Breast epithelium (tissue), 4 donors: ENCODE measurements at regions of chr19 and their contacts with region 1.

Region 1: GRCh38 chr19:2578901-2579677 is 103.2 kb downstream of the GADD45B start:
- DNase-seq: peak; percentile 89 to 92
- H3K4me3 ChIP-seq: peak overlapping the region; percentile 44 to 78 (median 57)
- H3K27ac ChIP-seq: peak overlapping the region; percentile 87 to 89
- H3K4me1 ChIP-seq: peaks cover 10 to 15% of the 10 kb centered on the region in 2 donors
- H3K27me3 ChIP-seq: no peaks in the 10 kb centered on the region
- CTCF ChIP-seq: peak; percentile 90 to 99 (median 98)
- POLR2A ChIP-seq: no peak

Region 2: GRCh38 chr19:1700002-1700732 is 878.9 kb before region 1 on chr19:
- intact Hi-C with region 1: no loop called
- DNase-seq: no peak
- H3K4me3 ChIP-seq: no peak overlapping the region
- H3K27ac ChIP-seq: no peak overlapping the region
- H3K4me1 ChIP-seq: no peaks in the 10 kb centered on the region
- H3K27me3 ChIP-seq: peaks cover 5 to 42% of the 10 kb centered on the region in 2 donors
- CTCF ChIP-seq: no peak
- POLR2A ChIP-seq: no peak

Region 3: DNA sequence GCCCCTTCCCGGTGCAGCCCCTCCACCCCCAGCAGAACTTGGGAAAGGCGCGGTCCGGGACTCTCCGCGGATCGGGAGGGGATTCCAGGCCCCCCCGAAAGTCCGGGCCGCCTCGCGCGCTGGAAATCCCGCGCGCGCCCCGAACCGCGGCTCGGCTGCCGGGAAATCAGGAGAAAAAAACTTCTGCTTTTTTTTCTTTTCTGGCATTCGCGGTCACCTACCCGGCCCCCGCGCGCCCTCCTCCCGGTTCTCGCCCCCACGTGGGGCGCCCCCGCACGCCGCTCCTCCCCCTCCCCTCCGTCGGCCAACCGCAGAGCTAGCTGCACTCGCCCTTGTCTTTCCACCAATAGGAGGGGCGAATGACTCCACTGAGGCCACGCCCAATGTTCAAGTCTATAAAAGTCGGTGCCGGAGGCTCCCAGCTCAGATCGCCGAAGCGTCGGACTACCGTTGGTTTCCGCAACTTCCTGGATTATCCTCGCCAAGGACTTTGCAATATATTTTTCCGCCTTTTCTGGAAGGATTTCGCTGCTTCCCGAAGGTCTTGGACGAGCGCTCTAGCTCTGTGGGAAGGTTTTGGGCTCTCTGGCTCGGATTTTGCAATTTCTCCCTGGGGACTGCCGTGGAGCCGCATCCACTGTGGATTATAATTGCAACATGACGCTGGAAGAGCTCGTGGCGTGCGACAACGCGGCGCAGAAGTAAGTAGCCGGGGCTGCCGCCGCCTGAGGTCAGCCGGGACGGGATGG is 103.2 kb before region 1 on chr19 and contains the start of gene GADD45B:
- intact Hi-C with region 1: loop called (anchors 5 kb)
- DNase-seq: peak; percentile 96 to 99
- H3K4me3 ChIP-seq: peak within 1 kb of the TSS; percentile 71 to 91 (median 79)
- H3K27ac ChIP-seq: peak within 1 kb of the TSS; percentile 93 to 94
- H3K4me1 ChIP-seq: peaks cover 0 to 11% of the 10 kb centered on the region in 2 donors
- H3K27me3 ChIP-seq: no peaks in the 10 kb centered on the region
- CTCF ChIP-seq: peak in 2 of 3 donors; percentile 25 to 44
- POLR2A ChIP-seq: peak; percentile 100
- total RNA-seq, gene GADD45B: 136 to 301 (median 172) TPM

Region 4: DNA sequence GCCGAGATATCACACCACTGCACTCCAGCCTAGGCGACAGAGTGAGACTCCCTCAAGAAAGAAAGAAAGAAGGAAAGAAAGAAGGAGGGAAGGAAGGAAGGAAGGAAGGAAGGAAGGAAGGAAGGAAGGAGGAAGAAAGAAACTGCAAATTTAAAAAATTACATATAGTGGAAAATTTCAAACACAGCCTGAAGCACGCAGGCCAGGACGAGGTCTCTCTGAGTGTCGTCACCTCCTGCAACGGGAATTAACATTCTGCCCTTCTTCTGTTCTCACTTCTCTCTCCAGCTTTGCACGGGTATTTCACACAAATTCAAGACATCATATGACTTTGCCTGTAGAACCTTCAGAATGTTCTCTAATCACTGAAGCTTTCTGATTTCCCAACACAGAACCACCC is 15.2 kb after region 1 on chr19:
- intact Hi-C with region 1: no loop called
- DNase-seq: no peak
- H3K4me3 ChIP-seq: no peak overlapping the region
- H3K27ac ChIP-seq: no peak overlapping the region
- H3K4me1 ChIP-seq: no peaks in the 10 kb centered on the region
- H3K27me3 ChIP-seq: no peaks in the 10 kb centered on the region
- CTCF ChIP-seq: no peak
- POLR2A ChIP-seq: no peak

Region 5: DNA sequence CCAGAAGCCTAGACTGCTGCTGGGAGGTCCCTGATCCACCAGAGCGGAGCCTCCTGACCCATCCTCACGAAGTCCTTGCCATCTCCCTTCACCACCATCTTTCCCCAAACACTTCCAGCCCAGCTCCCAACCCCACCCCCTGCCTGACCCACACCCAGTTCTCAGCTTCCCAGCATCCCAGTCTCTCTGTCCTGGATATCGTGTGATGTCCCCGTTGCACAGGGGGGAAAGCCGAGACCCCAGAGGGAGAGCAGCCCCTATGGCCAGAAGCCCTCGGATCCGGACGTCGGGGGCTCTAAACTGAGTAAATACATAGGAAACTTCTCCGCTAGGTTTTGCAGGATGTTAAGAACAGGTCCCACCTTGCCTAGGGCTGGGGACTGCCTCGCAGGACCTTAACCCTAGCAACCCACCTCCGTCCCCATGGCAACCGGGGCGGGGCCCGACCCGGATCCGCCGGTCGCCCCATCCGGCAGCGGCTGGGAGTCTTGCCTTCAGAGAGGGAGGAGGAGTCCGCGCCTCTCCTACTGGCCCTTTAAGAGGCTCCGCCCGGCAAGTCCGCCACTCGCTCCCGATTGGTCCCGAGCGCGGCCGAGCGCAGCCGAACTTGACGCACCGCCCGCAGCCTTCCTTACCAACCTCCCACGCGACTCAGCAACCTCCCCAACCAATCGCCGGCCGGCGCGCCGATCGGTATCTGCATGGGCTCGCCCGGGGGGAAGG is 993.2 kb after region 1 on chr19:
- intact Hi-C with region 1: no loop called
- DNase-seq: peak; percentile 100
- H3K4me3 ChIP-seq: peak overlapping the region; percentile 90 to 96 (median 95)
- H3K27ac ChIP-seq: peak overlapping the region; percentile 76 to 92
- H3K4me1 ChIP-seq: no peaks in the 10 kb centered on the region
- H3K27me3 ChIP-seq: no peaks in the 10 kb centered on the region
- CTCF ChIP-seq: no peak
- POLR2A ChIP-seq: no peak